Activated CD4-positive, alpha-beta memory T cell treated with anti-CD3 and anti-CD28 coated beads for 36 hours (primary cell): ENCODE measurements at regions of chr3 and their contacts with region 1.

Region 1: DNA sequence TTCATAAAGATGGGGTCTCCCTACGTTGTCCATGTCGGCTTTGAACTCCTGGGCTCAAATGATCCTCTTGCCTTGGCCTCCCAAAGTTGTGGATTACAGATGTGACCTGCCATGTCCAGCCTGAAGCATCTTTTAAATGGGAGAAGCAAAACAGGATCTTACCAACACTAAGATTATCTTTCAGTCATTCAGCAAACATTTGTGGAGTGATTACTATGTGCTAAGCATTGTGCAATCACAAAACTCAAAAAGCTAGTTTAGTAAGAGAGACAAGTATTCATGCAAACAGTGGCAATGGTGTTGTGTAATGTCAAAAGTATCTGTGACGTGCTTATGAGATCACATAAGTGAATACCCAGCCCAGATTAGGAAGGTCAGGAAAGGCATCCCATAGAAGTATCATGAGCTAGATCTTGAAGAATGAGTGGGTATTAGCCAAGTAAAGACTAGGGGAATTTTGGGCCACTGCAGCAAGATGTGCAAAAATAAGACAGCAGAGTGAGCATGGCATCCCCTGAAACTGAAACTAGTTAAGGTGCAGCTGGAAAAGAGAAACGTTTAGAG is 32.0 kb downstream of the SEC62 start:
- DNase-seq: peak; percentile 14
- H3K4me3 Mint-ChIP-seq: no peak overlapping the region
- H3K27ac Mint-ChIP-seq: peak overlapping the region; percentile 83
- H3K4me1 Mint-ChIP-seq: peaks cover 36% of the 10 kb centered on the region
- H3K27me3 Mint-ChIP-seq: no peaks in the 10 kb centered on the region

Region 2: GRCh38 chr3:169759256-169759655 is 239.4 kb before region 1 on chr3:
- CTCF ChIA-PET with region 1: no interaction called
- POLR2A ChIA-PET with region 1: no interaction called
- intact Hi-C with region 1: loop called (anchors 1 kb)
- DNase-seq: no peak
- H3K4me3 Mint-ChIP-seq: peak overlapping the region; percentile 12
- H3K27ac Mint-ChIP-seq: peak overlapping the region; percentile 76
- H3K4me1 Mint-ChIP-seq: peaks cover 30% of the 10 kb centered on the region
- H3K27me3 Mint-ChIP-seq: no peaks in the 10 kb centered on the region

Region 3: GRCh38 chr3:169812332-169813235 is 186.1 kb before region 1 on chr3 and contains the starts of genes LRRC34 and LRRIQ4:
- CTCF ChIA-PET with region 1: interaction called, 3 read pairs
- POLR2A ChIA-PET with region 1: no interaction called
- intact Hi-C with region 1: loop called (anchors 1 kb)
- DNase-seq: peak; percentile 88
- H3K4me3 Mint-ChIP-seq: peak within 1 kb of the TSS; percentile 75
- H3K27ac Mint-ChIP-seq: peak within 1 kb of the TSS; percentile 43
- H3K4me1 Mint-ChIP-seq: peaks cover 19% of the 10 kb centered on the region
- H3K27me3 Mint-ChIP-seq: no peaks in the 10 kb centered on the region
- total RNA-seq, gene LRRC34: 2.8 to 2.9 TPM
- total RNA-seq, gene LRRIQ4: 0.14 TPM in 1 of 2 experiments, not detected in the other

Region 4: GRCh38 chr3:169980055-169980454 is 18.6 kb before region 1 on chr3:
- CTCF ChIA-PET with region 1: no interaction called
- POLR2A ChIA-PET with region 1: no interaction called
- intact Hi-C with region 1: loop called (anchors 2 kb)
- DNase-seq: no peak
- H3K4me3 Mint-ChIP-seq: no peak overlapping the region
- H3K27ac Mint-ChIP-seq: no peak overlapping the region
- H3K4me1 Mint-ChIP-seq: peaks cover 9% of the 10 kb centered on the region
- H3K27me3 Mint-ChIP-seq: no peaks in the 10 kb centered on the region

Region 5: DNA sequence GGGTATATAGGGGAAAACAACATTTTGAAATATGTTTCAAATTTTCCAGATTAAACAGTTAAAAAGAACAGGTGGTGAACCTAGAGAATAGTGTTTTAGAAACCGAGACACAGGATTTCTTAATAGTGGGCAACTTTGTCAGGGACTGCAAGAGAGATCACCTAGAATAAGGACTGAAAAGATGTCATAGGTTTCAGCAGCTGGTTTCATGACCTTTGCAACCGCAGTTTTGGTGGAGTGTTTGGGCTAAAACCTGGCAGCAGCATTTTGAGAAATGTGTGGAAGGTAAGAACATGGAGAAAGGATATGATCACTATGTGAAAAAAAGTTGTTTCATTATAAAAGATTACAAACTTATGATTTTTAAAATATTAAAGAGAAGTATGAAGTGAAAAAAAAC is 258.5 kb after region 1 on chr3:
- CTCF ChIA-PET with region 1: no interaction called
- POLR2A ChIA-PET with region 1: no interaction called
- intact Hi-C with region 1: loop called (anchors 1 kb)
- DNase-seq: peak; percentile 64
- H3K4me3 Mint-ChIP-seq: no peak overlapping the region
- H3K27ac Mint-ChIP-seq: peak overlapping the region; percentile 26
- H3K4me1 Mint-ChIP-seq: peaks cover 40% of the 10 kb centered on the region
- H3K27me3 Mint-ChIP-seq: no peaks in the 10 kb centered on the region